Activated B cell treated with CpG ODN at 0.5 μM for 24 hours (primary cell): ENCODE measurements at regions of chr6 and their contacts with region 1.

Region 1: DNA sequence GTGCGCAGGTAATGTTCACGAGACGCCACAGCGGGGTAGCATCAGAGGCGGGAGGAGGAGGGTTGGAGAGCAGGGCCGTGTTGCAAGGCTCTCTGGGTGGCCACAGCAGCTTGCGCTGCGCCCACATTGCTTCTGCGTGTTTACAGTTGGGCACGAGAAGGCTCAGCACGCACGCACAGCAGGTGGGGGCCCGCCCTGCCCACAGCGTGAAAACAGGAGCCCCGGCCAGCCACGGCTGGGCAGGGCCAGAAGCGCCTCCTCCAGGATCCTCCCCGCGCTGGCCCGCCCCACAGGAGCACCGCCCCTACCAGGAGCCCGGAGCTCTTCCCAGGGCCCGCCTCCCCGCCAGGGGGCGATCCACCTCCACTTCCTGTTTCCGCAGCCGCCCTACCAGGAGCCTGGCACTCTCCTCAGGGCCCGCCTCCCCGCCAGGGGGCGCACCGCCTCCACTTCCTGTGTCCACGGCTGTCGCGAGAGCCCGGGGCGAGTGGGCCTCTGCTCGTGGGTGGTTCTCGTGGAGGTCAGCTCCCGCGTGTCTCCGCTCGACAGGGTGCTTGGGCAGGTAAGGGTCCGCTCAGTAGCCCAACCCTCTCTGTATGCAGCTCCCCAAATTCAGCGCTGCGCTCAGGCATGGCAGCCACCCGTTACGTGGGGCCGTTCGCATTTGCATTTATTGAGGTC is at the start of gene FAM50B:
- DNase-seq: peak; percentile 86
- ATAC-seq: peak; percentile 95
- H3K4me3 Mint-ChIP-seq: peak within 1 kb of the TSS; percentile 80
- H3K27ac Mint-ChIP-seq: peak within 1 kb of the TSS; percentile 80
- H3K4me1 Mint-ChIP-seq: peaks cover 22% of the 10 kb centered on the region
- H3K27me3 Mint-ChIP-seq: no peaks in the 10 kb centered on the region
- CTCF ChIP-seq: peak; percentile 63
- total RNA-seq, gene FAM50B: 7.6 and 8.1 TPM in 2 replicates

Region 2: DNA sequence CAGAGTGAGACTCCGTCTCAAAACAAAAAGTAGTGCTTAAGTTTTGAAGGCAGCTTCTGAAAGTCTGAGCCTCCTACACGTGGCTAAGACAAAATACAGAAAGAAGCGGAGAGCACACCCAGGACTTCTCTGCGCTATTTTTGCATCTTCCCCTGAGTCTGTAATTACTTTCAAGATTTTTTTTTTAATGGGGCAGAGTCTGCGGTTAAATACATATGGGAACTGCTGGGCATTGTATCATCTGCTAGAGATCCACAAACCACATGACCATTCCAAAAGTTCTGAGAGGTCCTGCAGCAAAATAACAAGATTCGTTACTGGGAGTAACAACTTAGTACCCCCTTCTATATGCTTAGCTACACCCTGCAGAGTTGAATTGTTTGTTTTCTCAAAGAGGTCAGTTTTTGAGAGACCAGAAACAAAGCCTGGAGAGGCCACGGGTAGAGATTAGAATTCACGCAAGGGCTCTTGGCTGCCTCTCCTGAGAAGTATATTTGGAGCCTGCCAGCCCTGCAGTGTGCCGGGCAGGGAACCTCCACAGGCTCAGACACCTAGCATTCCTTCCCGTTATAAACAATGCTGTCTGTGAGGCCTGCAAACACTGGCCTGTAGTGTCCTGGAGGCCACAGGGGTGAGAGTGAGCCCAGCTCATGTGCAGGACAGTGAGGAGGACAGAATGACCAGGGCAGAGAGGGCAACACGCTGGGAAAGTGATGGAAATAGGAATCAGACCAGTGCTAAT is 48.0 kb before region 1 on chr6:
- CTCF ChIA-PET with region 1: interaction called, 3 read pairs
- POLR2A ChIA-PET with region 1: interaction called, 5 read pairs
- intact Hi-C with region 1: loop called (anchors 2 kb)
- DNase-seq: no peak
- ATAC-seq: no peak
- H3K4me3 Mint-ChIP-seq: no peak overlapping the region
- H3K27ac Mint-ChIP-seq: no peak overlapping the region
- H3K4me1 Mint-ChIP-seq: peaks cover 53% of the 10 kb centered on the region
- H3K27me3 Mint-ChIP-seq: no peaks in the 10 kb centered on the region
- CTCF ChIP-seq: no peak

Region 3: DNA sequence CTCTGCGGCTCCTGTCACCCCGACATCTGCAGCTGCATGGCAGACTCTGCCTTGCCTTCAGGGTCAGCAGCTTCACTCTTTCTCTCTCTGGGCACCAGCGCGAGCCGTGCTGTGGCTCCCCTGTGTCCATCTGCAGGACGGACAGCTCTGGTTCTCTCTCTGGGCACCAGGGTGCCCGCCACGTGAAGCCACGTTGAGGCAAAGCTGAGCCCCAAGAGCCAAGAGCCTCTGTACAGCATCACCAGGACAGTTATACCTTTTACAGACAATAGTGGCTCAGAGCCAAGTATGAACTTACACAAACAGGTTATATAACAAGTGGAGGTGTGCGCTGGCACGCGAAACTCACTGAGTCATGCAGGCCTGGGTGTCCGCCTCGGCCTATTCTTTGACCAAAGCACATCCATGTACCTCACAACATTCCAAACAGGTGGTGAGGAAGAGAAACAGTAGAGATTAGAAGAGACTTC is 50.9 kb after region 1 on chr6:
- CTCF ChIA-PET with region 1: no interaction called
- POLR2A ChIA-PET with region 1: no interaction called
- intact Hi-C with region 1: no loop called
- DNase-seq: no peak
- ATAC-seq: no peak
- H3K4me3 Mint-ChIP-seq: no peak overlapping the region
- H3K27ac Mint-ChIP-seq: no peak overlapping the region
- H3K4me1 Mint-ChIP-seq: no peaks in the 10 kb centered on the region
- H3K27me3 Mint-ChIP-seq: peaks cover 17% of the 10 kb centered on the region
- CTCF ChIP-seq: no peak

Region 4: DNA sequence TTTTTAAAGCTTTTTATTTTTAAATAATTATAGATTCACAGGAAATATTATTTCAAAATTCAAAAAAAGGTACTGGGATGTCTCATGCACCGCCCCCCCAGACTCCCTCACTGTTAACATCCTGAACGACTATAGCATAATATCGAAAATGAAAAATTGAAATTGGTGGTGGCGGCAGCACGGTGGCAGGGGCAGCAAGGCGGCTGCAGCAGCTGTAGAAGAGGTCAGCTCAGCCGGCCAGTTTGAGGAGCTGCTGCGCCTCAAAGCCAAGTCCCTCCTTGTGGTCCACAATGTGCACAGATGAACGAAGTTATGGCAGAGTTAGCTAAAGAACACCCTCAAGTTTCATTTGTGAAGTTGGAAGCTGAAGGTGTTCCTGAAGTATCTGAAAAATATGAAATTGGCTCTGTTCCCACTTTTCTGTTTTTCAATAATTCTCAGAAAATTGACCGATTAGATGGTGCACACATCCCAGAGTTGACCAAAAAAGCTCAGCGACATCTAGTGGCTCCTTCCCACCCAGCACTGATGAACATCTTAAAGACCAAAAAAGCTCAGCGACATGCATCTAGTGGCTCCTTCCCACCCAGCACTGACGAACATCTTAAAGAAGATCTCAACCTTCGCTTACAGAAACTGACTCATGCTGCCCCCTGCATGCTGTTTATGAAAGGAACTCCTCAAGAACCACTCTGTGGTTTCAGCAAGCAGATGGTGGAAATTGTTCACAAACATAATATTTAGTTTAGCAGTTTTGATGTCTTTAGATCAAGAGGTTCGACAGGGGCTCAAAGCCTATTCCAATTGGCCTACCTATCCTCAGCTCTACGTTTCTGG is 129.0 kb after region 1 on chr6:
- CTCF ChIA-PET with region 1: interaction called, 16 read pairs
- POLR2A ChIA-PET with region 1: no interaction called
- intact Hi-C with region 1: loop called (anchors 10 kb)
- DNase-seq: no peak
- ATAC-seq: peak; percentile 96
- H3K4me3 Mint-ChIP-seq: no peak overlapping the region
- H3K27ac Mint-ChIP-seq: no peak overlapping the region
- H3K4me1 Mint-ChIP-seq: peaks cover 5% of the 10 kb centered on the region
- H3K27me3 Mint-ChIP-seq: peaks cover 4% of the 10 kb centered on the region
- CTCF ChIP-seq: no peak

Region 5: DNA sequence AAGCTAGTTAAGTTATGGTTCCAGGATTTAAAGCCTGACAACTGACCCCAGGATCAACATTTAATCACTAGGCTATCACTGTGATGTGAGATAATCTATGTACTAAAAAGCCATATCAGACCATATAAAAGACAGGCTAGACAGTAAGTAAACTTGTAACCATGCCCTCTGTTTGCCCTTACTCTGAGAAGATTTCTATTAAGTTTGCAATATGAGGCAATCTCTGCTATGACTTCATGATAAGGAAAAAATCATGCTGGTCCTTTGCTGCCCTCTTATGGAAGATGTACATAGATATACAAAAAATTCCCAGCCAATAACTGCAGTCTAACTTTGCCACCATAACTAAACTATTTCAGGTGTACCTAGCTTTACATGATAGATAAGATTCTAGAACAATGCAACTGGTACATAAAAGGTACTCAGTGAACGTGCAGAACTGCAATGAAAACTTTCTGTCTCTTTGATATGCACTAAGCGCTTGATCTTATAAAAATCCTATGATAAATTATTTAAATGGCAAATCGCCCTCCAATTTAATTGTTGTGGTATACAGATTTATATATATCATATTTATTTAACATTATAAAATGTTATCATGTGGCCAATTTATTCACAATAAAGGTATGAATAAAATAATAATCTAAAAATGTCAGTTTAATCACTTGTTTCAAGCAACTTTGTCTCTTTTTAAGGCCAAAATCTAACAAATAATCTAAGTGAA is 159.4 kb after region 1 on chr6:
- CTCF ChIA-PET with region 1: no interaction called
- POLR2A ChIA-PET with region 1: no interaction called
- intact Hi-C with region 1: loop called (anchors 1 kb)
- DNase-seq: no peak
- ATAC-seq: peak; percentile 49
- H3K4me3 Mint-ChIP-seq: no peak overlapping the region
- H3K27ac Mint-ChIP-seq: no peak overlapping the region
- H3K4me1 Mint-ChIP-seq: peaks cover 25% of the 10 kb centered on the region
- H3K27me3 Mint-ChIP-seq: no peaks in the 10 kb centered on the region
- CTCF ChIP-seq: no peak

Region 6: GRCh38 chr6:4135665-4136353 is 286.7 kb after region 1 on chr6:
- CTCF ChIA-PET with region 1: no interaction called
- POLR2A ChIA-PET with region 1: no interaction called
- intact Hi-C with region 1: loop called (anchors 5 kb)
- DNase-seq: peak; percentile 83
- ATAC-seq: peak; percentile 92
- H3K4me3 Mint-ChIP-seq: peak overlapping the region; percentile 85
- H3K27ac Mint-ChIP-seq: peak overlapping the region; percentile 76
- H3K4me1 Mint-ChIP-seq: peaks cover 27% of the 10 kb centered on the region
- H3K27me3 Mint-ChIP-seq: no peaks in the 10 kb centered on the region
- CTCF ChIP-seq: no peak

Region 7: GRCh38 chr6:4155848-4156466 is 306.9 kb after region 1 on chr6:
- CTCF ChIA-PET with region 1: interaction called, 3 read pairs
- POLR2A ChIA-PET with region 1: no interaction called
- intact Hi-C with region 1: loop called (anchors 1 kb)
- DNase-seq: no peak
- ATAC-seq: peak; percentile 84
- H3K4me3 Mint-ChIP-seq: no peak overlapping the region
- H3K27ac Mint-ChIP-seq: peak overlapping the region; percentile 5
- H3K4me1 Mint-ChIP-seq: peaks cover 34% of the 10 kb centered on the region
- H3K27me3 Mint-ChIP-seq: no peaks in the 10 kb centered on the region
- CTCF ChIP-seq: peak; percentile 68

Region 8: DNA sequence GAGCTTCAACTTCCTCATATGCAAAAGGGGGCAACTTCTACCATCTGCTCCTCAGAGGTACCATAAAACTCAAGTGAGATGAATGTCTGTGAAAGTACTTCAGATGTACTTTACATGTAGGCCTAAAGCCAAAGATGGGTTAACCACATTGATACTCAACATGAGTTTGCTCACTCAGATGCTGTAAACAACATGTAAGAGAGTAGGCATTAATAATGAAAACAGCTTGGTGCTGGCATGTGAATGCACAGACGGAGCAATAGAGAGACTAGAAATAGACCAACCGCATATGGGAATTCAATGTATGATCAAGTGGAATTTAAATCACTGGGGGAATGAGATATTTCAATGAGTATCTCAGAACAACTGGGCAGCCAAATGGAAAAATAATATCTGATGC is 783.4 kb after region 1 on chr6:
- CTCF ChIA-PET with region 1: no interaction called
- POLR2A ChIA-PET with region 1: no interaction called
- intact Hi-C with region 1: no loop called
- DNase-seq: no peak
- ATAC-seq: no peak
- H3K4me3 Mint-ChIP-seq: no peak overlapping the region
- H3K27ac Mint-ChIP-seq: no peak overlapping the region
- H3K4me1 Mint-ChIP-seq: no peaks in the 10 kb centered on the region
- H3K27me3 Mint-ChIP-seq: no peaks in the 10 kb centered on the region
- CTCF ChIP-seq: no peak

Region 9: DNA sequence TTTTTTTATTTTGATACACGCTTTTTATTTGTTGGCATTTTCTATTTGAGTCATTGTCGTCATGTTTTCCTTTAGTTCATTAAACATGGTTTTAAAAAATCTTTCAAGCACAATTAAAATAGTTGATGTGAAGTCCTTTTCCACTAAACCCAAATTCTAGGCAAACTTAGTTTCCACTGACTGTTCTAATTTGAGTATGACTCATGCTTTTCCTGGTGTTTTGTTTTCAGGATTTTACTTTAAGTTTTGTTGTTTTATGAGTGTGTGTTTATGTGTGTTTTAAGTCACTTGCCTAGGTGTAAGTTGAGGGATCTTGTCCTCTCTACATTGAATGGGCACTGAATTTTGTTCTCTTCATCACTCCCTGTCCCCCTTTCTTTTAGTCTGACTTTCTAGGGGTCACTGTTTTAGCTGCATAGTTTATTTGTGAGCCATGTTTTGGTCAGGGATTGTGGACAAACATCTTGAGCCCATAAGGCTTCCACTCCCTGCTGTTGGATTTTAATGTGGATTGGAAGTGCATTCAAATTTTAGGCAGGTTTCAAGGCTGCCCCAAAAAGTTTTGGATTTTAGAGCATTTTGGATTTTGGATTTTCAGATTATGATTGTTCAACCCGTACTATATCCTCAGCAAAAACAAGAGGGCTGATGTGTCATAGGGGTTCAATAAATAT is 1021.9 kb after region 1 on chr6:
- CTCF ChIA-PET with region 1: no interaction called
- POLR2A ChIA-PET with region 1: no interaction called
- intact Hi-C with region 1: no loop called
- DNase-seq: no peak
- ATAC-seq: no peak
- H3K4me3 Mint-ChIP-seq: no peak overlapping the region
- H3K27ac Mint-ChIP-seq: no peak overlapping the region
- H3K4me1 Mint-ChIP-seq: peaks cover 36% of the 10 kb centered on the region
- H3K27me3 Mint-ChIP-seq: no peaks in the 10 kb centered on the region
- CTCF ChIP-seq: no peak